GM18951 (cell line): ENCODE measurements at regions of chr1 and their contacts with region 1.

Region 1: DNA sequence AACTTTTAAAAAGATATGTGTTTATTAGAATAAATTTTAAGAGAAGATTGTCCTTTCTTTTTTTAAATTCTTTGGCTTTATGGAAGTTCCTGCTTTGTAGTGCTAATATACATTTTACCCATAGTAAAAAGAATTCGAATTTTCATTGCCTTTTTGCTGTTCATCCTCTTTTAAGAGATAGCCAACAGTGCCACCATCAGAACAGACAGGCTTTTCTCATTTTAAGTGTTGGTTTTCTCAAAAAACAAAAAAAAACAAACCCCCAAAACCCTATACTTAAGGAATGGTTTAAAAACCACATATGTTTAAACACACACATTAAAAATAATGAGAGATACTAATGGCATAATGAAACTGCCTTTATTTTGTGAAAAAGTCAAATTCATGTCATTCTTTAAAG is 118.8 kb downstream of the NEK7 start:
- POLR2A ChIP-seq: no peak

Region 2: GRCh38 chr1:196732526-196732925 is 1543.1 kb before region 1 on chr1:
- in situ Hi-C with region 1: loop called (anchors 25 kb)
- POLR2A ChIP-seq: no peak

Region 3: GRCh38 chr1:198001776-198002408 is 273.7 kb before region 1 on chr1:
- in situ Hi-C with region 1: no loop called
- POLR2A ChIP-seq: no peak